ENCODE measurements at regions of chr22 and their contacts with region 1.

Region 1: DNA sequence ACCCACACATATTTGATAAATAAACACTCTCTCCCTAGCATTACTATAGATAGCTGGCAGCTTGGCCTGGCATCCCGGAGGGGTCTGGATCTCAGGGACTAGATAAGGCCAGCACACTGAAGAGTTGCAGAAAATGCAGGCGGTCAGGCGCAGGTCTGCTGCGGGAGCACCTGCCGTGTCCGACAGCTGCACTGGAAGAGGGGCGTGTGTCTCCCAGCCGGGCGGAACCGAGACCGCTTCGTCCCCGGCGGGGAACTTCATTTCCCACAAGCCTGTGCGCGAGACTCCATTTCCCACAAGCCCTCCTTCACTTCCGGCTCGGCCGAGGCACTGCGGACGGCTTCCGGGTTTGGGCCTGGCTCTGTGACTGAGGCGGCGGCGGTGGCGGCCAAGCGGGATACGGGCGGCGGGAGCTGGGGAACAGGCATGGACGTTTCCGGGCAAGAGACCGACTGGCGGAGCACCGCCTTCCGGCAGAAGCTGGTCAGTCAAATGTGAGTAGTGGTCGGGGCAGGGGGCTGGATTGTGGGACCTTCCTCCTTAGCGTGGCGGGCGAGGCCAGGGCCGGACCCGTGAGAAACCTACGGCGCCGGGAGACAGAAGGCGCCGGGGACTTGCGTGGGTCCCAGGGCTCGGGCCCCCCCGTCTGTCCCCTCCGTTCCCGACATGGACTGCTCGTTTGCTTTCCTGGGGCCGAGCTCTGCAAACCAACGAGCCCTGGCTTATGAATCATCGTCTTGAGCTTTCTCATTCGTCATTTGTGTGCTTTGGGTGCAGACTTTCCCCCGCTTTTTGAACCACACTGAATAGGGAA is at the start of gene MED15:
- DNase-seq: peak; percentile 95
- ATAC-seq: peak; percentile 85
- H3K4me3 Mint-ChIP-seq: peak within 1 kb of the TSS; percentile 85
- H3K27ac Mint-ChIP-seq: peak within 1 kb of the TSS; percentile 96
- H3K4me1 Mint-ChIP-seq: peaks cover 50% of the 10 kb centered on the region
- H3K27me3 Mint-ChIP-seq: no peaks in the 10 kb centered on the region
- total RNA-seq, gene MED15: 84.4 to 107 TPM

Region 2: GRCh38 chr22:19986410-19987341 is 520.8 kb before region 1 on chr22:
- CTCF ChIA-PET with region 1: no interaction called
- POLR2A ChIA-PET with region 1: no interaction called
- intact Hi-C with region 1: no loop called
- DNase-seq: peak; percentile 84
- ATAC-seq: peak; percentile 88
- H3K4me3 Mint-ChIP-seq: no peak overlapping the region
- H3K27ac Mint-ChIP-seq: no peak overlapping the region
- H3K4me1 Mint-ChIP-seq: no peaks in the 10 kb centered on the region
- H3K27me3 Mint-ChIP-seq: no peaks in the 10 kb centered on the region

Region 3: GRCh38 chr22:20319745-20320658 is 187.5 kb before region 1 on chr22 and contains the start of gene DGCR6L:
- CTCF ChIA-PET with region 1: no interaction called
- POLR2A ChIA-PET with region 1: interaction called, 5 read pairs
- intact Hi-C with region 1: loop called in 1 of 2 experiments (anchors 2 kb)
- DNase-seq: peak; percentile 99
- ATAC-seq: peak; percentile 53
- H3K4me3 Mint-ChIP-seq: peak within 1 kb of the TSS; percentile 85
- H3K27ac Mint-ChIP-seq: peak within 1 kb of the TSS; percentile 79
- H3K4me1 Mint-ChIP-seq: peaks cover 55% of the 10 kb centered on the region
- H3K27me3 Mint-ChIP-seq: no peaks in the 10 kb centered on the region
- total RNA-seq, gene DGCR6L: 22.4 to 24.8 TPM

Region 4: DNA sequence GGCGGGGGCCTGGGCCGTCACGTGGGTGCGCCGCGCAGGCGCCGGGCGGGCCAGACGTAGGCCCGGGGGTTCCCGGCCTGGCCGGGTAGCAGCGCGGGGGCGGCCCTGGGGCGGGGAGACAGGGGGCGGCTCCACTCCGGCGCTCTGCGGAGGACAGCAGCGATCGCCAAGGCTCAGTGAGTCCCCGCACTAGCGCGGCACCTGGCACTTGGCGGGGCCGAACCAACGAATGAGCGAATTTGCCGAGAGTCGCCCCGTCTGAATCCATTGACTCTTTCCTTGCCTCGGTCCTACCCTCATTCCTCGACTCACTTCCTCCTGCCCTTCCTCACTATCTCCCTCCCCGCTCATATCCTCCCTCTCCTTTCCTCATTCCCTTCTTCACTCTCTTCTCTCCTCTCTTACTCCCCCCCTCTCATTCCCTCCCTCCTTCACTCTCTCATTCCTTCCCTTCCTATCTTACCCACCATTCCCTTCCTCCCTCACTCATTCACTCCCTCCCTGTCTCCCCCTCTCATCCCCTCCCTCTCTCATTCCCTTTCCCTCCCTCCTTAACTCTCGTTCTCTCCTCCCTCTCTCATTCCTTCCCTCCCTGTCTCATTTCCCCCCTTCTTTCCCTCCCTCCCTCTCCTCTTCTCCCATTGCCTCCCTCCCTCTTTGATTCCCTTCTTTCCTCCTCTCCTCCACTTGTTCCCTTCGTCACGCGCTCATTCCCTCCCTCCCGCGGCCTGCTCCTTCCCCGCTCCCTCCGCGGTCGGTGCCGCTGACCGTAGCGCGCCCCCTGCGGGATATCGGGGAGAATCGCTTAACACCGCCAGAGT is 11.4 kb before region 1 on chr22:
- CTCF ChIA-PET with region 1: interaction called, 4 read pairs
- POLR2A ChIA-PET with region 1: interaction called, 7 read pairs
- intact Hi-C with region 1: loop called (anchors 1 kb)
- DNase-seq: peak; percentile 96
- ATAC-seq: peak; percentile 95
- H3K4me3 Mint-ChIP-seq: peak overlapping the region; percentile 76
- H3K27ac Mint-ChIP-seq: peak overlapping the region; percentile 70
- H3K4me1 Mint-ChIP-seq: peaks cover 29% of the 10 kb centered on the region
- H3K27me3 Mint-ChIP-seq: no peaks in the 10 kb centered on the region

Region 5: DNA sequence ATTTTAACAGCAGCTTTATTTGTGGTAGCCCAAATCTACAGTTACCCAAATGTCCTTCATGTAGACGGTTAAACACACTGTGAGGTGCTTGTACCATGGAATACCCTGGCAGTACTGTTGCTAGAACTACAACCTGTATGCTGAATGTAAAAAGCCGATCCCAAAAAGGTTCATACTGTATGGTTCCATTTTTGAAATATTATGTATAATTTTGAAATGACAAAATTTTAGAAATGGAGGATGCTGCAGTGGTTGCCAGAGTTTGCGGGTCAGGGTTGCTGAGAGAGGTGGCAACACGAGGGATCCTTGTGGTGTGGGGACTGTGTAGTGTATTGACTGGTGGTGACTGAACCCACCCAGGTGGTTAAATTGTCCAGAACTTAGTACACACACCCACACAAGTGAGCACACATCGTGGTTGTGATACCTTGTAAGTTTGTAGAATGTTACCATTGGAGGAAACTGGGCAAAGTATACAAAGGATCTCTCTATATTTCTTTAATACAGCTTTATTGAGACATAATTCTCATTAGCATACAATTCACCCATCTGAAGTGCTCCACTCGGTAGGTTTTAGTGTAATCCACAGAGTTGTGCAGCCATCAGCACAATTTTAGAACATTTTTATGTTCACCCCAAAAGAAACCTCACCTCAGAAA is 55.9 kb after region 1 on chr22:
- CTCF ChIA-PET with region 1: interaction called, 30 read pairs
- POLR2A ChIA-PET with region 1: interaction called, 6 read pairs
- intact Hi-C with region 1: loop called (anchors 2 to 5 kb)
- DNase-seq: peak; percentile 49
- ATAC-seq: peak; percentile 43
- H3K4me3 Mint-ChIP-seq: no peak overlapping the region
- H3K27ac Mint-ChIP-seq: peak overlapping the region; percentile 61
- H3K4me1 Mint-ChIP-seq: peaks cover 62% of the 10 kb centered on the region
- H3K27me3 Mint-ChIP-seq: no peaks in the 10 kb centered on the region

Region 6: GRCh38 chr22:20916983-20917810 is 409.7 kb after region 1 on chr22 and contains the start of gene CRKL:
- CTCF ChIA-PET with region 1: no interaction called
- POLR2A ChIA-PET with region 1: no interaction called
- intact Hi-C with region 1: loop called in 1 of 2 experiments (anchors 5 kb)
- DNase-seq: peak; percentile 98
- ATAC-seq: peak; percentile 98
- H3K4me3 Mint-ChIP-seq: peak within 1 kb of the TSS; percentile 99
- H3K27ac Mint-ChIP-seq: peak within 1 kb of the TSS; percentile 93
- H3K4me1 Mint-ChIP-seq: peaks cover 27% of the 10 kb centered on the region
- H3K27me3 Mint-ChIP-seq: no peaks in the 10 kb centered on the region
- total RNA-seq, gene CRKL: 80.8 to 92.0 TPM